Caco-2 (cell line): ENCODE measurements at regions of chrX and their contacts with region 1.

Region 1: DNA sequence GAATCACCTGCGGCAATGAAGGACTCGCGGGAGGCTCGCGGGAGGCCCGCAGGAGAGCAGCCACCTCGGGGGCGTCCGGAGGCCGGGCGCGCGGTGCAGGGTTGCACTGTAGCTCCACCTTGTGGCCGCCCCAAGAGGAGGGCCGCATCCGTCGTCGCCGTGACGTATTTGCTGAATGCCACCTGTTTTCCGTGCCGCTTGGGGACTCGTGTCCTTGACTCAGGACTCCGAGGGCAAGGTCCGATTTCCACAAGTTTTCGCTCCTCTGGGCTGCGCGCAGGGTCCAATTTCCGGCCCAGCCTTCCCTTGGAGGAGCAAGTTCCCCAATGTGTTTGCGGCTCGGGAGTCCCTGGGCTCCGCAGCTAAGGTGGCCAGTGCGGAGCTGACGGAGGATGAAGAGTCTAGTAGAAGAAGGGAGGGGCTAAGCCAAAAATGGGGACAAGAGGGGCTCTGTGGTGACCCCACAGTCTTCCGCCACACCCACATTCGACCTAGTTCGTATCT is 10.7 kb upstream of the DLG3 start:
- DNase-seq: peak; percentile 79 to 84
- H3K4me3 ChIP-seq: peak overlapping the region; percentile 54
- H3K4me3 Mint-ChIP-seq: peak overlapping the region; percentile 86
- H3K27ac Mint-ChIP-seq: peak overlapping the region; percentile 90
- H3K4me1 ChIP-seq: peaks cover 7% of the 10 kb centered on the region; the same call in 1 of the 2 replicates
- H3K4me1 Mint-ChIP-seq: peaks cover 6% of the 10 kb centered on the region
- H3K27me3 ChIP-seq: no peaks in the 10 kb centered on the region
- H3K27me3 Mint-ChIP-seq: no peaks in the 10 kb centered on the region
- CTCF ChIP-seq: peak; percentile 76

Region 2: GRCh38 chrX:70328939-70329338 is 105.0 kb before region 1 on chrX:
- CTCF ChIA-PET with region 1: no interaction called
- POLR2A ChIA-PET with region 1: no interaction called
- intact Hi-C with region 1: loop called (anchors 2 kb)
- DNase-seq: no peak
- H3K4me3 ChIP-seq: no peak overlapping the region
- H3K4me3 Mint-ChIP-seq: no peak overlapping the region
- H3K27ac Mint-ChIP-seq: no peak overlapping the region
- H3K4me1 ChIP-seq: no peaks in the 10 kb centered on the region
- H3K4me1 Mint-ChIP-seq: no peaks in the 10 kb centered on the region
- H3K27me3 ChIP-seq: no peaks in the 10 kb centered on the region
- H3K27me3 Mint-ChIP-seq: no peaks in the 10 kb centered on the region
- CTCF ChIP-seq: no peak

Region 3: GRCh38 chrX:70422851-70423341 is 11.0 kb before region 1 on chrX and contains the start of gene GDPD2:
- CTCF ChIA-PET with region 1: interaction called, 15 read pairs
- POLR2A ChIA-PET with region 1: no interaction called
- intact Hi-C with region 1: loop called (anchors 1 kb)
- DNase-seq: peak; percentile 34 to 53
- H3K4me3 ChIP-seq: peak within 1 kb of the TSS; percentile 21
- H3K4me3 Mint-ChIP-seq: peak within 1 kb of the TSS; percentile 58
- H3K27ac Mint-ChIP-seq: peak within 1 kb of the TSS; percentile 78
- H3K4me1 ChIP-seq: peaks cover 22% of the 10 kb centered on the region
- H3K4me1 Mint-ChIP-seq: peaks cover 9% of the 10 kb centered on the region
- H3K27me3 ChIP-seq: no peaks in the 10 kb centered on the region
- H3K27me3 Mint-ChIP-seq: no peaks in the 10 kb centered on the region
- CTCF ChIP-seq: peak in 1 of 2 experiments; percentile 46
- total RNA-seq, gene GDPD2: 1.9 and 2.2 TPM in 2 replicates

Region 4: DNA sequence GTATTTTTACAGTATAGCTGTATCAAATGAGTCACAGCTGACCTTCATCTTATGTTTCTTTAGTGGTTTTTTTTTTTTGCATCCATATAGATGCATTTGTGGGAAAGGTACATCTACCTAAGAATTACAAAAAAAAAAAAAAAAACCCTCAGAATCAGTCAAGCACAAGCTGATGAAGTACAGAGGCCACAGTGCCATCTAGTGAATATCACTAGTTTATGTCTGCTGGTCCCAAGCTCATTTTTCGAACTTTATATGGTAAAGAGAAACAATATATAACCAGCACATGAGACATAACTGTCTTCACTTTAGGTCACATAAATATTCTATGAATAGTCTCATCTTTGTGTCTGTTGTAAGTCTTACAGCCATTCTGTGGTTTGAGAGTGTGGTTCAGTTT is 230.8 kb after region 1 on chrX:
- CTCF ChIA-PET with region 1: no interaction called
- POLR2A ChIA-PET with region 1: interaction called, 3 read pairs
- intact Hi-C with region 1: loop called (anchors 5 kb)
- DNase-seq: peak in 1 of 2 experiments; percentile 7
- H3K4me3 ChIP-seq: no peak overlapping the region
- H3K4me3 Mint-ChIP-seq: no peak overlapping the region
- H3K27ac Mint-ChIP-seq: no peak overlapping the region
- H3K4me1 ChIP-seq: peaks cover 14% of the 10 kb centered on the region
- H3K4me1 Mint-ChIP-seq: peaks cover 9% of the 10 kb centered on the region
- H3K27me3 ChIP-seq: no peaks in the 10 kb centered on the region
- H3K27me3 Mint-ChIP-seq: no peaks in the 10 kb centered on the region
- CTCF ChIP-seq: peak in 1 of 2 experiments; percentile 37